CD4-positive, alpha-beta memory T cell (primary cell): ENCODE measurements at regions of chr1 and their contacts with region 1.

Region 1: DNA sequence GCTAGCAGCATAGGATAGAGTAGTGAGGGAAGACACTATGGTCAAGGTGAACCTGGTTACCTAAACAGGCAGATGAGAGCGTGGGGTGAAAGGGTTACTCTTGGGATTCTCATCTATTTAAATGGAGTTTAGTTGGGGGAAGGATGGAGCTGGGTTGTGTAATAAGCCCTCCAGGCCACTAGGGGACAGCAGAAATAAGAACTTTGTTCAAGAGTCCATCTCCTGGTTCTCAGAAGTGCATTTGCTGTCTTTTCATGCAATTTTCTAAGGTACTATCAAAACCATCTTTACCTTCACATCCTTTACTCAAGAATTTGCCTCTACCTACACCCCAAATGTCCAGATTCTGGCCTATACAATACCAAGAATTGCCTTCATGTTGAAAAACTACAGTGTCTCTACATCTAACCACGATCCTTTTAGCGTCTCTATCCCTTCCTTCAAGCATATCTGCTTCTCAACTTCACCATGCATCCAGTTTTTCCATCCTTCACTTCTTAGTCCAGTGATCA is 28.0 kb downstream of the SLAMF1 start:
- DNase-seq: peak; percentile 52 to 58 (median 55)
- H3K4me3 ChIP-seq: no peak overlapping the region
- H3K4me3 Mint-ChIP-seq: peak overlapping the region in 5 of 8 donors; percentile 4 to 41 (median 23)
- H3K27ac ChIP-seq: no peak overlapping the region
- H3K27ac Mint-ChIP-seq: peak overlapping the region; percentile 61 to 94 (median 84)
- H3K4me1 ChIP-seq: peaks cover 86% of the 10 kb centered on the region
- H3K4me1 Mint-ChIP-seq: peaks cover 53 to 86% (median 69%) of the 10 kb centered on the region in 4 donors
- H3K27me3 ChIP-seq: no peaks in the 10 kb centered on the region
- H3K27me3 Mint-ChIP-seq: no peaks in the 10 kb centered on the region

Region 2: GRCh38 chr1:160629286-160630210 is 10.7 kb after region 1 on chr1:
- CTCF ChIA-PET with region 1: interaction called, 44 read pairs
- POLR2A ChIA-PET with region 1: interaction called, 40 read pairs
- intact Hi-C with region 1: loop called (anchors 1 kb)
- DNase-seq: peak; percentile 88 to 94 (median 91)
- H3K4me3 ChIP-seq: peak overlapping the region; percentile 18 to 36
- H3K4me3 Mint-ChIP-seq: peak overlapping the region; percentile 80 to 91 (median 84)
- H3K27ac ChIP-seq: peak overlapping the region; percentile 93
- H3K27ac Mint-ChIP-seq: peak overlapping the region; percentile 87 to 100 (median 99)
- H3K4me1 ChIP-seq: peaks cover 98% of the 10 kb centered on the region
- H3K4me1 Mint-ChIP-seq: peaks cover 82 to 100% (median 93%) of the 10 kb centered on the region in 4 donors
- H3K27me3 ChIP-seq: no peaks in the 10 kb centered on the region
- H3K27me3 Mint-ChIP-seq: no peaks in the 10 kb centered on the region

Region 3: GRCh38 chr1:160637821-160638539 is 19.2 kb after region 1 on chr1:
- CTCF ChIA-PET with region 1: interaction called, 9 read pairs
- POLR2A ChIA-PET with region 1: interaction called, 126 read pairs
- intact Hi-C with region 1: no loop called
- DNase-seq: peak; percentile 82 to 89 (median 85)
- H3K4me3 ChIP-seq: peak overlapping the region; percentile 31 to 39
- H3K4me3 Mint-ChIP-seq: peak overlapping the region; percentile 75 to 87 (median 82)
- H3K27ac ChIP-seq: peak overlapping the region; percentile 68
- H3K27ac Mint-ChIP-seq: peak overlapping the region; percentile 87 to 99 (median 98)
- H3K4me1 ChIP-seq: peaks cover 99% of the 10 kb centered on the region
- H3K4me1 Mint-ChIP-seq: peaks cover 77 to 98% (median 88%) of the 10 kb centered on the region in 4 donors
- H3K27me3 ChIP-seq: no peaks in the 10 kb centered on the region
- H3K27me3 Mint-ChIP-seq: no peaks in the 10 kb centered on the region

Region 4: DNA sequence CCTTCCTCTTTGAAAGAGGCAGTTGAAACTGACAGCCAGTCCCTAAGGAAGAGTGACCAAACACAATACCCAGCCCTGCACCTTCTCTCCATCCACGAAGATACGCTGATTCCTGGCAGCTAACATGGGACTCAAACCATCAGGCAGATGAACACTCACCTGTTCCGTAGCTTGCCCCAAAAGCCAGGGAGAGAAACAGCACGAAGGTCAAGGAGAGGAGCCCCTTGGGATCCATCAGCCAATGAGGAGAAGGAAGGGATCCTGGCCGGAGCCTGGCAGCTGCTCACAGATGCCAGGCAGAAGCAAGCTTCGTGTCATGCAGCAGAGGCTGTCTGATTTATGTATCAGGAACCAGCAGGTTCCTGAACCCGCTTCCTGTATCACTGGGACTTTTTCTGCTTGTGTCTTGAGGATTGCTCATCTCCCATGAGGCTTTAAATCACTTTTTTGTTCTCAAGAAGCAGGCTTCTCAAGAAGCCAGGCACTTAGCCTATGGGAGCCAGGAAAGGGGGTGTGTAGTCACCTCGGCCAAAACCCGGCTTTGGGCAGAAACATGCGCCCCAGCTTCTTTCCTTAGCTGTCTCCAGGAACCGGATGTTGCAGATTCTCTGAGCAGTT is 28.0 kb after region 1 on chr1 and contains the start of gene SLAMF1:
- CTCF ChIA-PET with region 1: interaction called, 36 read pairs
- POLR2A ChIA-PET with region 1: interaction called, 21 read pairs
- intact Hi-C with region 1: loop called (anchors 5 kb)
- DNase-seq: peak; percentile 45 to 74 (median 51)
- H3K4me3 ChIP-seq: peak within 1 kb of the TSS; percentile 80 to 97
- H3K4me3 Mint-ChIP-seq: peak within 1 kb of the TSS; percentile 98 to 100 (median 99)
- H3K27ac ChIP-seq: peak within 1 kb of the TSS; percentile 88
- H3K27ac Mint-ChIP-seq: peak within 1 kb of the TSS; percentile 87 to 98 (median 97)
- H3K4me1 ChIP-seq: peaks cover 55% of the 10 kb centered on the region
- H3K4me1 Mint-ChIP-seq: peaks cover 47 to 94% (median 61%) of the 10 kb centered on the region in 4 donors
- H3K27me3 ChIP-seq: no peaks in the 10 kb centered on the region
- H3K27me3 Mint-ChIP-seq: no peaks in the 10 kb centered on the region
- total RNA-seq, gene SLAMF1: 59.8 to 59.9 TPM